Left cardiac atrium (tissue), 4 donors: ENCODE measurements at regions of chr11 and their contacts with region 1.

Region 1: DNA sequence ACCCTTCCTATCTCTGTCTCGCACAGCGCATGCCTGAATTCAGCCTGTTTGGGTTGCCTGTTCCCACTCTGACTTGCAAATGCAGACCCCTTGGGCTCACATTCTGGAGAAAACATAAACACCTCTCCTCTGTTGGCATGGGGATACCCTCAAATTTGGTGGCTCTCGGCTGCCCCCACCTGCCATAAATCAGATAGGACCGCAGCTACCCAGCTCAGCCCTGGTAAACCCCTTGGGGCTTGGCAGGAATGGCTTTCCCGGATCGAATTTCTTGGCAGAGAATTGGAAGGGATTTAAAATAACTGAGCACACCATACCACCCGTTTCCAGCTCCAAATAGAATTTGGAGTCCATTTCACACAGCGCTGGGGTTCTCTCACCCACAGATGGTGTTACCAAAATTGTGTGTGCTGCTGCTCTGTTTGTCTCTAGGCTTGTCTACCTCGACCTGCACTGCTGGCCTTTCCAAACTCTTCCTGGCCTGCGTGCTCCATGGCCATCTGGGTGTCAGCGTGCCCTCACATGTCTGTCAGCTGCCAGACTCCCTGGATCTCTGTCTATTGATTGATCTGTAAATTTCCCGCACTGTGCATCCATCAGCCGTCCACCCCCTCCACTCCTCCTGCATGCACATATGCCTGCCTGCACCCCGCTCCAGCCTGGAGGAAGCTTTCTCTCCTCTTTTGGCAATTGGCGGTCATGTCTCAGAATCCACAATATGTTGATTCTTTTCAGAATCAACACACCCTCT is 134.0 kb downstream of the NTM start:
- DNase-seq: peak; percentile 30
- ATAC-seq: peak; percentile 77 to 80

Region 2: GRCh38 chr11:131408025-131408640 is 96.2 kb before region 1 on chr11:
- intact Hi-C with region 1: loop called in 1 of 2 experiments (anchors 5 kb)
- DNase-seq: no peak
- ATAC-seq: peak; percentile 61 to 90

Region 3: DNA sequence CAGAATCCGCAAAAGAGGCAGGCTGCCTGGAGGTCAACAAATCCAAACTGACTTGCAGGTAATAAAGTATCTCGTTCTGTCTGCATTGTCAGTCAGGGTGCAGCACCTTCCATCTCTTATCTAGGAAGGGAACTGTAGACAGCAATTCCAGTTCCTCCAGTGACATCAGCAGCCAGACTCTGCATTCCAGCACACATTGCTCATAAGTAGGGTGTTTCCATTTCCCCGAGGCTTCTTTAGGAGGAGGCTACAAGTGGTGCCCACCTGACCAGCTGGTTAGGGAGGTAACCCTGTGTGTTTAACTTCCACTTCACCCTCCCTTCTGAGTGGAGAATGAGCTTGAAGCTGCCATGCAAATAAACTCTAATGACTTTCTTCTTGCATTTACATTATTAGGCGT is 80.7 kb before region 1 on chr11:
- intact Hi-C with region 1: no loop called
- DNase-seq: no peak
- ATAC-seq: peak; percentile 34 to 95